ENCODE measurements at regions of chr1 and their contacts with region 1.

Region 1: GRCh38 chr1:61111084-61111788 is 28.9 kb downstream of the NFIA start:
- DNase-seq: no peak
- H3K4me3 ChIP-seq: no peak overlapping the region
- H3K27ac ChIP-seq: no peak overlapping the region
- H3K4me1 ChIP-seq: peaks cover 2% of the 10 kb centered on the region
- H3K27me3 ChIP-seq: no peaks in the 10 kb centered on the region
- CTCF ChIP-seq: no peak
- EP300 ChIP-seq: no peak
- POLR2A ChIP-seq: no peak

Region 2: GRCh38 chr1:60668585-60668984 is 442.7 kb before region 1 on chr1:
- intact Hi-C with region 1: no loop called
- DNase-seq: no peak
- H3K4me3 ChIP-seq: no peak overlapping the region
- H3K27ac ChIP-seq: no peak overlapping the region
- H3K4me1 ChIP-seq: no peaks in the 10 kb centered on the region
- H3K27me3 ChIP-seq: no peaks in the 10 kb centered on the region
- CTCF ChIP-seq: no peak
- EP300 ChIP-seq: no peak
- POLR2A ChIP-seq: no peak

Region 3: GRCh38 chr1:60705026-60705425 is 406.2 kb before region 1 on chr1:
- intact Hi-C with region 1: no loop called
- DNase-seq: no peak
- H3K4me3 ChIP-seq: no peak overlapping the region
- H3K27ac ChIP-seq: no peak overlapping the region
- H3K4me1 ChIP-seq: no peaks in the 10 kb centered on the region
- H3K27me3 ChIP-seq: no peaks in the 10 kb centered on the region
- CTCF ChIP-seq: no peak
- EP300 ChIP-seq: no peak
- POLR2A ChIP-seq: no peak

Region 4: GRCh38 chr1:61079898-61080336 is 31.3 kb before region 1 on chr1:
- intact Hi-C with region 1: loop called in 1 of 4 experiments (anchors 2 kb)
- DNase-seq: peak; percentile 83 to 91 (median 88)
- H3K4me3 ChIP-seq: no peak overlapping the region
- H3K27ac ChIP-seq: peak overlapping the region in 1 of 2 donors; percentile 70
- H3K4me1 ChIP-seq: peaks cover 9% of the 10 kb centered on the region
- H3K27me3 ChIP-seq: no peaks in the 10 kb centered on the region
- CTCF ChIP-seq: peak in 1 of 3 donors; percentile 35
- EP300 ChIP-seq: no peak
- POLR2A ChIP-seq: no peak

Region 5: GRCh38 chr1:61142751-61143494 is 31.7 kb after region 1 on chr1:
- intact Hi-C with region 1: no loop called
- DNase-seq: peak in 2 of 5 donors; percentile 26 to 35
- H3K4me3 ChIP-seq: no peak overlapping the region
- H3K27ac ChIP-seq: no peak overlapping the region
- H3K4me1 ChIP-seq: peaks cover 25% of the 10 kb centered on the region
- H3K27me3 ChIP-seq: no peaks in the 10 kb centered on the region
- CTCF ChIP-seq: no peak
- EP300 ChIP-seq: no peak
- POLR2A ChIP-seq: no peak

Measured in ovary (tissue), 10 donors.